PC-9 (cell line): ENCODE measurements at regions of chr16 and their contacts with region 1.

Region 1: DNA sequence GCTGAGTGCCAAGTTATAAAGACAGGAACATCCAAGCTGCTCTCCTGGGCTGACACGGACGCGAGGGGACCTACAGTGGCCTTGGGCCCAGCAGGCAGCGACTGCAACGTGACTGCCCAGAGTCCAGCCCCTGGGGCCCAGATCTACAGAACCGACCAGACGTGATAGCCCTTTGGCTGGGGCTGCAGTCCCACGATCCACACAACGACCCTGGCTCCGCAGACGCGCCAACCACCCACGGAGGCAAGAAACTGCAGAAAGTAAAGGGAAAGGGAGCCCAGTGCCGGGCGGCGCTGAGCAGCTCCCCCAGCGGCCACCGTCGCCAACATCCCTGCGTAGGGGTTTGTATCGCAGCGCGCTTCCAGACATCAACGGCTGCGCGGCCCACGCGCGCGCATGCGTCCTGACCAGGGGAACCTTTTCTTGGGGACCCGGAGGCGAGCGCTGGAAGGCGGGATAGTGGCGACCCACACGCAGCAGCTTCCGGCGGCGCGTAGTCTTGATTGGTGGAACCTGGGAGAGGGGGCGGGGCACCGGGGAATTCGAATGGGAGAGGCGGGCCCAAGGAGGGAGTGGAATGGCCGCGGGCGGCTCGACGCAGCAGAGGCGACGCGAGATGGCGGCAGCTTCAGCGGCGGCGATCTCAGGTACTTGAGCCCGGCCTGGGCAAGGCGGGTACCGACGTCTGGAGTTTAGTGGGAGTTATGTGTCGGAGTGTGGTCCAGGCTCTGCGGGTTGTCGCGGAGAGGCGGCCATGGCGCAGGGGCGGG is at the start of gene KIF22:
- DNase-seq: peak; percentile 96 to 100
- H3K4me3 ChIP-seq: peak within 1 kb of the TSS; percentile 94
- H3K27ac ChIP-seq: 0 out of 2 replicates have a peak within 1 kb of the TSS, but pooled peaks have one; percentile 10
- H3K4me1 ChIP-seq: peaks cover 17% of the 10 kb centered on the region
- H3K27me3 ChIP-seq: no peaks in the 10 kb centered on the region
- CTCF ChIP-seq: peak; percentile 81
- total RNA-seq, gene KIF22: 179 and 195 TPM in 2 replicates

Region 2: DNA sequence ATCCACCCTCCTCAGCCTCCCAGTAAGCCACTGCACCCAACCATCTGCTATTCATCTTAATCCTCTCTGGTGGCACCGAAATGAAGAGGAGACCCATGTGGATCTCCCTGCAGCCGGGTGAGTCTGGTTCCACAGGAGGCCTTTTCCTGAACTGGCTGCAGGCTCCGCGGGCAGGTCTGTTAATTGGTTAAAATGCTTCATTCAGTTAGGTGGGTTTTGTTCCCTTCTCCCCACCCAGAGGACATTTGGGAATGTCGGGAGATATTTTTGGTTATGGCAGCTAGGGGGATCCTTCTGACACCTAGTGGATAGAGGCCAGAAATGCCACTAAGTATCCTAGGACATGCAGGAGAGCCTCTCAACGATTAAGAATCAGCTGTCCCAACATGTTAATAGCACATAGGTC is 61.2 kb before region 1 on chr16:
- CTCF ChIA-PET with region 1: interaction called, 7 read pairs
- POLR2A ChIA-PET with region 1: no interaction called
- intact Hi-C with region 1: loop called (anchors 1 kb)
- DNase-seq: peak; percentile 37 to 53
- H3K4me3 ChIP-seq: no peak overlapping the region; the same call in 1 of the 2 replicates
- H3K27ac ChIP-seq: no peak overlapping the region
- H3K4me1 ChIP-seq: no peaks in the 10 kb centered on the region
- H3K27me3 ChIP-seq: no peaks in the 10 kb centered on the region
- CTCF ChIP-seq: peak; percentile 84

Region 3: DNA sequence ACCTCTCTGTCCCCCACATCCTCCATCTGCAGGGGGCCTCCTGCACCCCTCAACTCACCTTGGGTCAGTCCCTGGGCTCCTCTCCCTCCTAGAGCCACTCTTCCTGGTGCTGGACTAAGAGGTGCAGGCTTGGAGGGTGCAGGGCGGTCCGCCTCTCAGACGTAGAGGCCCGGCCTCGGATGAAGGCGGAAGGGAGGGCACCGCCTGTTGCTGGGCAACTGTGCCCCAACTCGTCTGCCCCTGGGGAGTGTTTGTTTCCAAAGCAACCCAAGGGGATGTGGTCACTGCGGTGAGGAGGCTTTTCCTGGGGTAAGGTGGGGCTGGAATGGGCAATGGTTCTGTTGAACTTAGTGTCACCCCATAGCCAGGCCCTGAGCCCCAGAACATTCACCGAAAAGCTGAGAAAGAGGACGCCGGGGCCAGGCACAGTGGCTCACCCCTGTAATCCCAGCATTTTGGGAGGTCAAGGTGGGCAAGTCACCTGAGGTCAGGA is 44.5 kb before region 1 on chr16 and contains the start of gene C16orf54:
- CTCF ChIA-PET with region 1: no interaction called
- POLR2A ChIA-PET with region 1: interaction called, 27 read pairs
- intact Hi-C with region 1: no loop called
- DNase-seq: no peak
- H3K4me3 ChIP-seq: no peak within 1 kb of the TSS
- H3K27ac ChIP-seq: no peak within 1 kb of the TSS
- H3K4me1 ChIP-seq: no peaks in the 10 kb centered on the region
- H3K27me3 ChIP-seq: no peaks in the 10 kb centered on the region
- CTCF ChIP-seq: no peak
- total RNA-seq, gene C16orf54: not detected in 2 replicates

Region 4: DNA sequence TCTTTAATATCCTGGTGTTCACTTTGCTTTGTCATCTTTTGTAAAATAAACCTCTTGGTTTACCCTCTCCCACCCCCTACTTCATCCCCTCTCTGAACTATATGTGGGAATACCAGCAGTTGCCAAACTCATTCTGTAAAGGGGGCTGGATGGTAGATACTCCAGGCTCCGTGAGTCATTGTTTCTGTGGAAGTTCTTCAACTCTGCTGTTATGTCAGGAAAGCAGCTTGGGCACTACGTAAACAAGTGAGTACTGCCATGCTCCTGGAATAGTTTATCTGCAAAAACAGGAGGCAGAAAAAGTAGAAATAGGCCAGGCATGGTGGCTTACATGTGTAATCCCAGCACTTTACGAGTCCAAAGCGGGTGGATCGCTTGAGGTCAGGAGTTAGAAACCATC is 47.5 kb after region 1 on chr16:
- CTCF ChIA-PET with region 1: no interaction called
- POLR2A ChIA-PET with region 1: interaction called, 12 read pairs
- intact Hi-C with region 1: no loop called
- DNase-seq: no peak
- H3K4me3 ChIP-seq: no peak overlapping the region
- H3K27ac ChIP-seq: no peak overlapping the region
- H3K4me1 ChIP-seq: no peaks in the 10 kb centered on the region
- H3K27me3 ChIP-seq: no peaks in the 10 kb centered on the region
- CTCF ChIP-seq: no peak